Ascending aorta (tissue), 2 donors: ENCODE measurements at regions of chr3 and their contacts with region 1.

Region 1: GRCh38 chr3:154120961-154121700 is at the start of gene ARHGEF26:
- DNase-seq: peak; percentile 55 to 92
- H3K4me3 ChIP-seq: peak within 1 kb of the TSS; percentile 71 to 90
- H3K27ac ChIP-seq: peak within 1 kb of the TSS; percentile 75 to 80
- H3K4me1 ChIP-seq: peaks cover 0 to 2% of the 10 kb centered on the region in 2 donors
- H3K27me3 ChIP-seq: no peaks in the 10 kb centered on the region
- CTCF ChIP-seq: no peak
- total RNA-seq, gene ARHGEF26: 33.8 TPM

Region 2: DNA sequence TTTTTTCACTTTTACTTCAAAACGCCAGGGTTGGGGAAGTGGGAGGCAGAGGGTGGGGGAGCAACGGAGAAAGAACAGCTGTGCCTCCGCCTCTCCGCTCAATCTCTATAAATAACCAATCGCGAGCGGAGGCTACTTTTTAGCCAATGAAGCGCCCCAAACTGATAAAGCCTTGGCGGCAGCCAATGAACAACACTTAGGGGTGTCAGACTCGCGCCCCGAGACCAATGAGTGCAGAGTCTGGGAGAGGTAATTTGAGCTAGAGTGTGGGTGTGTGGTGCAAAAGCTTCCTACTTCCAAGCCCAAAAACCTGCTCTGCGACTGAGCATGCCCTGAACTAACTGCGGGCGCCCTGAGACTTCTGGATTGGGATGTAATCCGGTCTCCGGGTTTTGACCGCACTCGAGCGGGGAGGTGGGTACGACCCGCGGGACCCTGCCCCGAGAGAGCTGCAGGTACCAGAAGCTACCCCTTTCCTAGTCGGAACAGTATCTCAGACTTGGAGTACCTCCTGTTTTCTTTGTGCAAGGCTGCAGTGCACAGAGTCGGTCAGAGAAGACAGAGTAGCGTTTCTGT is 959.9 kb before region 1 on chr3:
- intact Hi-C with region 1: loop called (anchors 10 kb)
- DNase-seq: peak; percentile 95 to 98
- H3K4me3 ChIP-seq: peak overlapping the region; percentile 77 to 78
- H3K27ac ChIP-seq: peak overlapping the region; percentile 92
- H3K4me1 ChIP-seq: peaks cover 0 to 16% of the 10 kb centered on the region in 2 donors
- H3K27me3 ChIP-seq: no peaks in the 10 kb centered on the region
- CTCF ChIP-seq: no peak

Region 3: GRCh38 chr3:154060238-154061000 is 60.7 kb before region 1 on chr3:
- intact Hi-C with region 1: loop called (anchors 2 kb)
- DNase-seq: peak in 1 of 2 donors; percentile 77
- H3K4me3 ChIP-seq: peak overlapping the region in 1 of 2 donors; percentile 30
- H3K27ac ChIP-seq: peak overlapping the region; percentile 70 to 75
- H3K4me1 ChIP-seq: peaks cover 0 to 10% of the 10 kb centered on the region in 2 donors
- H3K27me3 ChIP-seq: no peaks in the 10 kb centered on the region
- CTCF ChIP-seq: no peak

Region 4: DNA sequence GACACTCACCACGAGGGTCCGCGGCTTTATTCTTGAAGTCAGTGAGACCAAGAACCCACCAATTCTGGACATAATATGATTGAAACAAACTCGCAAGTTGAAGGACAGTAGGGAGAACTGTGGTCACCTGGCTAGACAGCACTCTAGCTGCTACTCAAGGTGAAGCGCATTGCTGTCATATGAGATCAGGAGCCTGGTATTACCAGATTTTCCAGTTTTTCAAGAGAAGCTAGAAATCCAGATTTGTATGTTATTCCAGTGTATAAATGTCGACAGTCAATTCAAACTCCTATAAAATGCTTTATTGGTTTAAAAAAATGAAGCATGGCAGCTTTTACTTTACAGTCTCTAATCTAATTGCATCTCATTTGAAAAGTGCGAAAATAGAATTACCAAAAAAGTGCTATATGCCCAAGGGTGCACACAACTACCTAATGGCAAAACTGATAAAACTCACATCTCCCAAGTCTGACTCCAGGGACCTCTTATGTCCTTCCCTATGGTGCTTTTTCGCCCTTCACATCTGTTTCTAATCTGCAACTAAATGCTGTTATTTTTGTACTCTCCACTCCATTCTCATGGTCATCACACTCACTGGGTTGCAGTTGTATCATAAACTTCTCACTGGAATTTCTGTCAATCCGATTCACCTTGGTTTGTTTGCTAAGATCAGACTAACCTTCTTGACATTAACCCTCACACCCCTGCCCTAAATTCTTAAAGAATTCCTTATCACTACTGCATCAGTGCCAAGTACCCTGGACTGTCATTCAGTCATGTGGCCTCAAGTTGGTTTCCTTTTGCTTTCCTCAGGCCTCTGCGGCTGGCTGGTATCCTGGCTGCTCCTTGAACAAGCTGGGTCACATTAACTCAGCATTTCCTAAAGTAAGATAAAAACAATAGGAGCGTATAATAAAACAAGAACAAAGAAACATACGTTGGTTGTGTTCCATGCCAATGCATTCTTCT is 31.4 kb before region 1 on chr3:
- intact Hi-C with region 1: no loop called
- DNase-seq: no peak
- H3K4me3 ChIP-seq: no peak overlapping the region
- H3K27ac ChIP-seq: no peak overlapping the region
- H3K4me1 ChIP-seq: no peaks in the 10 kb centered on the region
- H3K27me3 ChIP-seq: no peaks in the 10 kb centered on the region
- CTCF ChIP-seq: no peak

Region 5: DNA sequence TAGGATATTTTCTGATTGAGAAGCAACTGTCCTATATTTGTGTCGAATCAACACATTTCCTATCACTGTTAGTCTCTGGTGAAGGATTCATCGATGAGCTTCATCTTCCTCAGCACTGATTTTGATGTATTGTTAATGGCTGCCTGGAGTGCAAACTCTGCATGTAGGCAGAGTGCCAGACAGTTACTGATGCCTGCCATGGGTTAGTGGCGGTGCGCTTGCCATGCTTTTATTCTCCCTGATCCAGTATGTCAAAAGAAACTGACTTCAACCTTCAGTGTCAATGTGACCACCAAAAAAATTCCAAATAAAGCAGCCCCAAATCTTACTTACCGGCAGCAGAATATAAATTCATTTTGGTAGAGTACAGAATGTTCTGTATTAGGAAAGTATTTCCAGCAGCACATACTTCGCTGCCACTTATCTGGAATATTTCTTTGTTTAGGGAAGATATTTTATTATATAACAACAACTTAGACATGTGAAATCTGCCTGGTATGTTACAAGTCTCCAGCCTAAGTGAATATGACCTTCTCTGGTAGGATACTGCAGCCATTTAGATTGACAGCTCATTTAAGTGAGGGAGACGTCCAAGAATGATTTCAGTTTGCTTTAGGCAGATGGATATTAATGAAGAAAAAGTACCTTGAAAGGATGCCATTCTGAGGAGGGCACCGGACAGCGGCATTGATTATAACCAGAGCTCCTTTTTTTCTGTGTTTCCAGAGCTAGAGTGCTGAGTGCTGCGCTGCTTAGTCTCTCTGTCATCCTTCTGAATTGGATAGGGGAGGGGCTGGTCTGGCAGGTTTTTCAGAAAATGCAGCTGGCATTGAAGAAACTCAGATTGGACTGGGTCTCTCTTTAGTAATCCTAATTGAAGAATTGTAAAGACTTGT is 60.0 kb after region 1 on chr3:
- intact Hi-C with region 1: loop called (anchors 5 kb)
- DNase-seq: no peak
- H3K4me3 ChIP-seq: peak overlapping the region in 1 of 2 donors; percentile 30
- H3K27ac ChIP-seq: peak overlapping the region; percentile 76 to 83
- H3K4me1 ChIP-seq: peaks cover 0 to 19% of the 10 kb centered on the region in 2 donors
- H3K27me3 ChIP-seq: no peaks in the 10 kb centered on the region
- CTCF ChIP-seq: no peak

Region 6: DNA sequence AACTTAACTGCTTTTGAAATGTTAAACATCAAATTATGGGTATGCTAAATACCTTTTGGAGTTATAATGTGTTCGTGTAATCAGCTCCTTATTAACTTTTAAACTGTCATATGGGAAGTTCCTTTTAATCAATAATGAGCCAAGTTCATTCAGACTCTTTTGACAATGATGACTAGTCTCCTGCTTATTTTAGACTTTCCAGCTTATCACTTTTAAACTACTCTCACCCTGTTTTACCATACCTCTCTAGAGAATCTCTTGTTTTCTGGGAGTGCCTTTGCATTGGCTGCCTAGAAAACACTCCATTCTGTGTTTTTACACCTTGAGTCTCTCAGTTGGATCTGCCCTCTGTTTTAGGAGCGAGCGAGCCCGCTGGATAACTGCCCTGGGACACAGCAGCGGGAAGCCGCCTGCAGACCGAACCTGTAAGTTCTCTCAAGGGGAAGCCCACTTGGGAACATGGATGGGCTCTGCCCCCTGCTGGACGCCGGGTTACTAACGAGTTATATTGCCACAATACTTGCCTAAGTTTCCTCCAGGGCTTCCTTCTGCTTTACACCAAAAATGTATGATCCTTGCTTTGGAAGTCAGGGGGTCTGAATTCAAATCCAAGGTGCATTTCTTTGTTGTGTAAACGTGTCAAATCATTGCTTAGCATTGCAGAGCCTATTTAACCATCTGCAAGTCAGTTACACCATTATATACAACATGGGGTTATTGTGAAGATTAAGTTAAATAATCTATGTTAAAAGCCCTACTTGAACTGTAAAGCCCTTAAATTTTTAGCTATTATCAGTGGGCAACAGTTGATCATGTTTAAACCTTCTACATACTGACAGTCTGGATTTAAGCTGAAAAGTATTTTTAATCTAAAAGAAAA is 131.9 kb after region 1 on chr3:
- intact Hi-C with region 1: loop called (anchors 1 kb)
- DNase-seq: peak; percentile 48 to 95
- H3K4me3 ChIP-seq: peak overlapping the region in 1 of 2 donors; percentile 21
- H3K27ac ChIP-seq: no peak overlapping the region
- H3K4me1 ChIP-seq: peaks cover 0 to 2% of the 10 kb centered on the region in 2 donors
- H3K27me3 ChIP-seq: no peaks in the 10 kb centered on the region
- CTCF ChIP-seq: peak; percentile 84 to 91 (median 89)